GM12878 (cell line): ENCODE measurements at regions of chr6 and their contacts with region 1.

Region 1: DNA sequence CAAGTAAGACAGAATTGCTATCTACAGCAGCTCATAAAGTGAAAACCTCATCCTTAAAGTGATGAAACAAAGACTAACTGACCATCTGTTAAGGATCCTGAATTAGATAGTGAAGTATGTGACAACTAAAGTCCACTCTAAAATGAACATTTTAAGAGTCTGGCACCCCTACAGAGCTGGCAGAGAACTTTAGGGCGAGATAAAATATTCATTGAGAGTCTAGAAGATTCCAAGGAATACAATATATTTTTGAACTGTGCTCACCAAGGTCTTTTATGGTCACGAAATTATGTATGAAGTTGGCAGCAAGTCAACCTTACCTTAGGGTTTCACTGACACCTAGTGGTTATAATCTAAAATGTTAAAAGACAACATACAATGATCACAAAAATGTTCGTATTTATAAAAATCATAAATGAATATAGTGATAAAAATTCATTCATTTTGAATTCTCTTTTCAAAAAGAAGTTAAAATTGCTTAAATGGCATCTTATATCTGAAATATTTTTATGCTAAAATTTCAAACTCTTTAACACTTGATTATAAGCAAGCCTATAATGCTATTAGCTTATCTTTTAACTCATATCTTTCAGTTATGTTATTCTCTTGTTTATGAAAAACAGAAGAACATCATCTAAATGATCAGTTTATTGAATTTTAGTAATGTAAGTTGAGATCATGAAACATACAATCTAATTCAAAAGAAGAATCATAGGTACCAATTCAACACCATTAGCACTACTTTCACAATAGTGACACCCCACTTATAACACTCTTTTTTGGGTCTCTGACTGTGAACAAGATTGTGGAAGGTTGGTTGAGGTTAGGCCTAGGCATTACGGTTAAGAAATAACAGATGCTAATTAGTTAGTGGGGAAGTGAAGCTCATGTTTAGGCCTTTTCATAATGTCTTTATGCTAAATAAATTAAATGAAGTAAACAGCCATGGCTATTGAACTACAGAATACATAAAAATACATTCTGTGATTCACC is 27.5 kb downstream of the RSPH3 start:
- DNase-seq: peak; percentile 31
- ATAC-seq: peak; percentile 85
- H3K4me3 ChIP-seq: no peak overlapping the region
- H3K27ac ChIP-seq: no peak overlapping the region
- H3K4me1 ChIP-seq: no peaks in the 10 kb centered on the region
- H3K27me3 ChIP-seq: no peaks in the 10 kb centered on the region
- CTCF ChIP-seq: peak; percentile 33 to 68 (median 36); a peak in 4 of 6 replicates
- EP300 ChIP-seq: no peak
- POLR2A ChIP-seq: no peak
- RAD21 ChIP-seq: peak; percentile 81

Region 2: DNA sequence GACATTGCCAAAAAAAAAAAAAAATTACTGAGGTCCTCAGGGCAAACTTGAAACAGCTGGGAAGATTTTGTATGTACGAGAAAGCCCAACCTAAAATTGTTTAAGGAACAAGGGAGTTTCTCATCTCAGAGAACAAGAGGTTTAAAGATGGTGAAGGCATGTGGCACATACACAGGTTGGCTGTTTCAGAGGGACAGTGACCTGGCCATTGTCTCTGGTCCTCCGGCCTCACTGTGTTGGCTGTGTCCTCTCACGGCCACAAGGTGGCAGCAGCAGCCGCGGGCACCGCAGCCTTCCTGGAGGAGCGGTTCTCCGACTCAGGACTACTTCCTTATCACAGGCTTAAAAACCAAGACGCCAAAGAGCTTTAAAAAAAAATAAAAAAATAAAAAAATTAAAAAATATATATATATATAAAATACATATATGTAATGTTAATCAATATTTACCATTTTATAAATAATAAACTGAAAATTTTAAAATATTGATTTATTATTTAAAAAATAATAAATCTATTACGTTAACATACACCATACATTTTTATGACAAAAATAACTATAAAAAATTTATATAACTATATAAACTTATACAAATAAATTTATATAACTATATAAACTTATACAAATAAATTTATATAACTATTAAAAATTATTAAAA is 751.6 kb before region 1 on chr6:
- CTCF ChIA-PET with region 1: interaction called, 8 read pairs
- POLR2A ChIA-PET with region 1: no interaction called
- RAD21 ChIA-PET with region 1: no interaction called
- SMC1A ChIA-PET with region 1: interaction called, 10 read pairs
- in situ Hi-C with region 1: loop called (anchors 10 kb)
- intact Hi-C with region 1: no loop called
- DNase-seq: no peak
- ATAC-seq: peak; percentile 100
- H3K4me3 ChIP-seq: no peak overlapping the region
- H3K27ac ChIP-seq: no peak overlapping the region
- H3K4me1 ChIP-seq: no peaks in the 10 kb centered on the region
- H3K27me3 ChIP-seq: no peaks in the 10 kb centered on the region
- CTCF ChIP-seq: peak; percentile 85 to 95 (median 93); a peak in 5 of 6 replicates
- EP300 ChIP-seq: no peak
- POLR2A ChIP-seq: no peak
- RAD21 ChIP-seq: peak; percentile 100

Region 3: DNA sequence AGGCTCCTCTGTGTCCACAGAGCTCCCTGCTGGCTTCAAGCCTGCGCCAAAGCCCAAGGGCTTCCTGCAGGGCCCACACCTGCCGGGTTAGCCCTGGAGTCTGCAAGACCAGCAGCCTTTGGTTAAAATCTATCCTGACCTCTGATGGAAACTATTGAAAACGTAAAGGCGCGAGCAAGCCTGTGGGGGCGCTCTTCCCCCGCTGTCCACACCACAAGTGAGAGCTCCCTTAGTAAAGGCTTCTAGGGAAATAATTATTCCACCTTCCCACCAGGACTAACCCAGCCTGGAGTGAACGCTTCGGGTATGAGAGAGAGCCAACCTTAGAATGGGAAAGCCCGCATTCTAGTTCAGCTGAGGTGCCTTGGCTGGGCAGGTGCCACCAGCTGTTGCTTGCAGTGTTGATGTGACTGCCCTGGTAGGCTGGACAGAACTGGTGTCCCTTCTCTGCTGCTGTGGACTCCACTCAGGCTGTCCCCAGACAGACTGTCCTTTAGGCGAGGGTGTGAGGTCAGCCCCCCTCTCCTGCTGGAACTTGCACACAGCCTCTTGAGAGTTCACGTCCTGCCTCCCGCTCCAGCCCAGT is 254.0 kb before region 1 on chr6:
- CTCF ChIA-PET with region 1: interaction called, 19 read pairs
- POLR2A ChIA-PET with region 1: no interaction called
- RAD21 ChIA-PET with region 1: interaction called, 5 read pairs
- SMC1A ChIA-PET with region 1: interaction called, 9 read pairs
- in situ Hi-C with region 1: no loop called
- intact Hi-C with region 1: no loop called
- DNase-seq: no peak
- ATAC-seq: no peak
- H3K4me3 ChIP-seq: no peak overlapping the region
- H3K27ac ChIP-seq: 0 out of 2 replicates have a peak overlapping the region, but pooled peaks have one; percentile 79
- H3K4me1 ChIP-seq: peaks cover 50% of the 10 kb centered on the region
- H3K27me3 ChIP-seq: no peaks in the 10 kb centered on the region
- CTCF ChIP-seq: peak in 2 of 3 experiments; percentile 29 to 61; a peak in 4 of 6 replicates
- EP300 ChIP-seq: no peak
- POLR2A ChIP-seq: no peak
- RAD21 ChIP-seq: peak; percentile 57

Region 4: GRCh38 chr6:158803733-158804143 is 168.8 kb before region 1 on chr6:
- CTCF ChIA-PET with region 1: interaction called, 127 read pairs
- POLR2A ChIA-PET with region 1: no interaction called
- RAD21 ChIA-PET with region 1: interaction called, 5 read pairs
- SMC1A ChIA-PET with region 1: interaction called, 7 read pairs
- in situ Hi-C with region 1: loop called (anchors 5 kb)
- intact Hi-C with region 1: no loop called
- DNase-seq: no peak
- ATAC-seq: peak; percentile 65
- H3K4me3 ChIP-seq: peak overlapping the region; percentile 55; the same call in 1 of the 2 replicates
- H3K27ac ChIP-seq: peak overlapping the region; percentile 96
- H3K4me1 ChIP-seq: peaks cover 72% of the 10 kb centered on the region
- H3K27me3 ChIP-seq: no peaks in the 10 kb centered on the region
- CTCF ChIP-seq: no peak
- EP300 ChIP-seq: 0 out of 4 replicates have a peak, but pooled peaks have one; percentile 19 to 40
- POLR2A ChIP-seq: peak; percentile 50; the same call in 1 of the 2 replicates
- RAD21 ChIP-seq: no peak

Region 5: GRCh38 chr6:158869826-158870648 is 102.5 kb before region 1 on chr6:
- CTCF ChIA-PET with region 1: interaction called, 5 read pairs
- POLR2A ChIA-PET with region 1: no interaction called
- RAD21 ChIA-PET with region 1: interaction called, 5 read pairs
- SMC1A ChIA-PET with region 1: interaction called, 16 read pairs
- in situ Hi-C with region 1: no loop called
- intact Hi-C with region 1: loop called (anchors 5 kb)
- DNase-seq: peak; percentile 98
- ATAC-seq: peak; percentile 91
- H3K4me3 ChIP-seq: peak overlapping the region; percentile 62
- H3K27ac ChIP-seq: peak overlapping the region; percentile 91
- H3K4me1 ChIP-seq: peaks cover 39% of the 10 kb centered on the region
- H3K27me3 ChIP-seq: no peaks in the 10 kb centered on the region
- CTCF ChIP-seq: peak; percentile 10 to 43 (median 34); a peak in 4 of 6 replicates
- EP300 ChIP-seq: peak; percentile 96 to 97; a peak in 3 of 4 replicates
- POLR2A ChIP-seq: peak; percentile 98
- RAD21 ChIP-seq: peak; percentile 38

Region 6: DNA sequence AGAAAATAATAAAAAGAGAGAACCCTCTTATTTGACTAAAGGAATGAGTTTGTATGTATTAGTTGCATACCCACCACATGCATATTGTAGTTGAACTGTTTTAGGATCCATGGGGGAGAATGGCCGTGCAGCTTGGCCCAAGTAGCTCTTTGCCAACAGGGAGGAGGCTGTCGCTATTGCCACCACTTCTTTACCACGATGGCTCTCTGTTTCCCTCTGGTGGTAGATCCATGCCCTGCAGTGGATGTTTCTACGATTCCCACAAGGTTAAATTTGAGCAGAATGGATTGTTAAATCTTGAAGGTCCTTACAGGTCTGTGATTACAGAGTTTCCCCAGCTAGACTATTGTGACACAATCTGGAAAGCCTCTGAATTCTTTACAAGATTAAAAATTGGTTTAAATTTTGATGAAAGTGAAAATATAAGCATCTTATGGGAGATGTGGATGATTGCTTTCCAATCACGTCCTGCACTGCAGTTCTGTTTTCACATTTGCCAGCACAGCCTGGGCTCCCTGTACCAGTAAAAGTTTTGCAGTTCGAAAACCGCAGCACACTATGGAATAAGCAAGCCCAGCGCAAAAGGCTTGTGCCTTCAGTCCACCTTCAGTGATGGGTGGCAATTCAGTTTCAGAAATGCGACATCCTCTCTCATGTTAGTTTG is 162.3 kb after region 1 on chr6:
- CTCF ChIA-PET with region 1: interaction called, 14 read pairs
- POLR2A ChIA-PET with region 1: no interaction called
- RAD21 ChIA-PET with region 1: interaction called, 9 read pairs
- SMC1A ChIA-PET with region 1: interaction called, 5 read pairs
- in situ Hi-C with region 1: no loop called
- intact Hi-C with region 1: no loop called
- DNase-seq: peak; percentile 36
- ATAC-seq: peak; percentile 95
- H3K4me3 ChIP-seq: no peak overlapping the region
- H3K27ac ChIP-seq: no peak overlapping the region
- H3K4me1 ChIP-seq: no peaks in the 10 kb centered on the region
- H3K27me3 ChIP-seq: peaks cover 0 to 2% of the 10 kb centered on the region in 2 experiments; a peak in 1 of 4 replicates
- CTCF ChIP-seq: peak; percentile 89 to 97 (median 96)
- EP300 ChIP-seq: no peak
- POLR2A ChIP-seq: no peak
- RAD21 ChIP-seq: peak; percentile 98